GM18951 (cell line): ENCODE measurements at regions of chr2 and their contacts with region 1.

Region 1: GRCh38 chr2:84865181-84865783 is 15.6 kb downstream of the TRABD2A start:
- POLR2A ChIP-seq: no peak

Region 2: GRCh38 chr2:84314901-84315330 is 550.4 kb before region 1 on chr2:
- in situ Hi-C with region 1: loop called (anchors 10 kb)
- POLR2A ChIP-seq: no peak